Activated T-helper 2 cell treated with anti-CD3 and anti-CD28 coated beads, Interferon-gamma antibody, Interleukin-2, Interleukin-4, amounts not matched to agents 10 μg/mL and 5 μg/mL and 100 μg/mL, durations not matched to agents 14 hours and 24 hours and 36 hours (primary cell): ENCODE measurements at regions of chr17 and their contacts with region 1.

Region 1: DNA sequence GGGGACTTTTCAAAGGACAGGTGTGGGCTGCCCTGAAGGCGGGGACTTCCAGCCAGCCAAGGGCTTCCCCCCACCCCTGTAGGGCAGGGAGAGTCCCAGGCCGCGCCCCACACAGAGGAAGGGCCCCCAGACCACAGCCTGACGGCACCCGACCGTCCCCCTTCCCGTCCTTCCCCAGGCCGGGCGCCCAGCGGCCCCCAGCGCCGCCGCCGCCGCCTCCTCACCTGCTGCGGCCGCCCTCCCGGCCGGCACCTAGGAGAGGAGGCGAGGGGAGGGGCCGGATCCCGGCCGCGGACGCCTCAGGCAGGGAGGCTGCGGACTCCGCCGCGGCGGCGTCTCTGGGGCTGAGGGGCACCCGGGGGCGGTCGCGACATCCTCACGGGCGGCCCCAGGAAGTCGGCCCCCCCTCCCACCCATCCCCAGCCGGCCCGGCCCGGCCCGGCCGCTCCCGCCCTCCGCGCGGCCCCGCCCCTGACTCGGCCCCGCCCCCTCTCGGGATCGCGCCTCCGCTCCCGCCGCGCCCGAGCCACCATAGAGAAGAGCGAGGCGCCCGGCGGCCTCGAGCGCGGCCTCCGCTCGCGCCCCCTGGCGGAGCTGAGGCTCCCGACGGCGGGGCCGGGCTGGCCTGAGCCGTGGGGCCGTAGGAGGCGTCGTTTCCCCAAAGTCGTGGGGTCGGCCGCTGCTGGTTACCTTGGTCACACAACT is 25.5 kb upstream of the RFFL start:
- DNase-seq: peak; percentile 84
- H3K4me3 Mint-ChIP-seq: peak overlapping the region; percentile 88
- H3K27ac Mint-ChIP-seq: peak overlapping the region; percentile 92
- H3K4me1 Mint-ChIP-seq: peaks cover 41% of the 10 kb centered on the region
- H3K27me3 Mint-ChIP-seq: no peaks in the 10 kb centered on the region

Region 2: DNA sequence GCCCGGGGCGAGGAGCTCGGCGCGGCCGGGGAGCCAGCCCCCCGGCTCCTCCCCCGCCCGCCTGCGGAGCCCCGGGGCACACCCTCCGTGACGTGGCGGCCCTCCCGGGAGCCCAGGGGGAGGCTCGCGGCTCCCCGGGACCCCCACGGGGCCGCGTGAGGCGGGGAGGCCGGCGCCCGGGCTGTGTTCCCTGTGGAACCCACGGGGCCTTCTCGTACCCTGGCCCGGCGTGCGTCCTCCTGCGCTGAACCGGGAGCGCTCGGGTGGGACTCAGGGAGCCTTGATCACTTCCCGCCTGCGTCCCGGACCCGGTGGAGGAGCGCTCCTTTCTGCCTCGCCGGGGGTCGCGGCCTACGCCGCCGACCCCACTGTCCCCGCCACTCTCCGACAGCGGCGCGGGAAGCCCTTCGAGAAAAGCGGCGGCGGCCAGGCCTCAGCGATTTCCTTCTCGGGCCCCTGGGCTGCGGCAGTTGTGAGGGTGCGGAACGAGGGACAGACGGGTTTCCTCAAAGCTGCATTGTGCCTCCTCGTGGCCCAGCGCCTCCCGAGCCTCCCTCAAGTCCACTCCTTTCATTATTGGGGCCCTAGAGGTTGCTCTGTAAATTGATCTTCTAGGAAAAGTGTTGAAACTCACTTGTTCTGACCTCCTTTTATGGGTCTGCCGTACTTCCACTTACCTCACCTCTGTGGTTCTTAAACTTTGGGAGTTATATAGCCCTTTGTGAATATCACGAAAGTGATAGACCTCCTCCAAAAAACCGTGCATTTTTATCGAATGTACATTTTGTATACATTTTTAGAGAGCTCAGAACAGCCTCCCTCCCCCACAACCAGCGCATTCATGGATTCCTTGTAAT is 108.1 kb before region 1 on chr17:
- intact Hi-C with region 1: loop called (anchors 5 kb)
- DNase-seq: peak; percentile 74
- H3K4me3 Mint-ChIP-seq: peak overlapping the region; percentile 94
- H3K27ac Mint-ChIP-seq: peak overlapping the region; percentile 96
- H3K4me1 Mint-ChIP-seq: peaks cover 39% of the 10 kb centered on the region
- H3K27me3 Mint-ChIP-seq: no peaks in the 10 kb centered on the region

Region 3: GRCh38 chr17:34998205-34998604 is 90.8 kb before region 1 on chr17:
- intact Hi-C with region 1: loop called (anchors 1 kb)
- DNase-seq: peak; percentile 70
- H3K4me3 Mint-ChIP-seq: no peak overlapping the region
- H3K27ac Mint-ChIP-seq: peak overlapping the region; percentile 57
- H3K4me1 Mint-ChIP-seq: peaks cover 6% of the 10 kb centered on the region
- H3K27me3 Mint-ChIP-seq: no peaks in the 10 kb centered on the region

Region 4: DNA sequence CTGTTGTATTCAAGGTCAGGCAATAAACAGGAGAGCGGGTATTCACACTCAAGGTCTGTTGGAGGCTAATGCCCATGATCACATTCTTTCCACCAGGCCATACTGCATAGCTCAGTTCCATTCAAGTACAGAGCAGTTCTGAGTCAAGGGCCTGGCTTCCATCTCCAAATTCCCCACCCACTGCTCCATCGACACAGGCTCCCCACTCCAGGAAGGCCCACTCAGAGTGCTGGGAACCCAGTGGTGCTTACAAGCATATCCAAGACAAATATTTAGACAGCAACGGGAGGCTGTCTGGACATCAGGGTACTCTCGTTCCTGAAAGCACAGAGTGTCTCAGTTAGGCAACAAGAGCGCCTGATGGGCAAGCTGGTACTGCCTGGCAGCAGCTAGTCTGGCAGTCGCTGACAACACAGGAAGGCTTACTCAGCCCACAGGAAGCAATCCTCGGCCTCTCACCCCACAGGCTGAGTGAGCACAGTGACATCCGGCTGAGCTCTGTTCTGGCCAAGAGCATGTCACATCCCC is 66.4 kb before region 1 on chr17:
- intact Hi-C with region 1: loop called (anchors 1 kb)
- DNase-seq: peak; percentile 63
- H3K4me3 Mint-ChIP-seq: peak overlapping the region; percentile 70
- H3K27ac Mint-ChIP-seq: peak overlapping the region; percentile 99
- H3K4me1 Mint-ChIP-seq: peaks cover 30% of the 10 kb centered on the region
- H3K27me3 Mint-ChIP-seq: no peaks in the 10 kb centered on the region

Region 5: DNA sequence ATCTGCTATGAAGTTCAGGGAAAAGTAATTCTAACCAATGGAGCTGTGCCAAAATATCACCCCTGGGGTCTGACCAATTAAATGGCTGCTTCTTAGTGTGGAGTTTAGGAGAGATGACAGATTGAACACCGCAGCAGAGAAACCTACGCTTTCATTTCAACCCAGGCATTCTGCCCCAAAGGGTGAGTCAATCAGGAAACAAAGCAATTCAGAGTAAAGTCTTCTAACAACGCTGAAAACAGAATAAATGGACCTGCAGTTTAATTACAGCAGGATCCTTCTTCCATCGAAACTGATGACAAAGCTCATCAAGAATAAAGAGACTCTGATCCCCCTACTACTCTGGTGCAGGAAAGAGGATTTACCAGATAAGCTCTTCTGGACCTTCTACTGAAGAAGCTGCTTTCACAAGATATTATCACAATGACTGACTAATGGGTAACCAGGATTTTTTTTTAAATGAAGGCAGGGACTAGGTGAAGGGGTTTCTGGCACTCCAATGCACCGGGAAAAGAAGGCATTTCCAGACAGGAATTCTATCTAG is 42.2 kb before region 1 on chr17:
- intact Hi-C with region 1: loop called (anchors 1 kb)
- DNase-seq: peak; percentile 59
- H3K4me3 Mint-ChIP-seq: peak overlapping the region; percentile 77
- H3K27ac Mint-ChIP-seq: peak overlapping the region; percentile 95
- H3K4me1 Mint-ChIP-seq: peaks cover 49% of the 10 kb centered on the region
- H3K27me3 Mint-ChIP-seq: no peaks in the 10 kb centered on the region

Region 6: GRCh38 chr17:35057332-35057915 is 31.6 kb before region 1 on chr17:
- intact Hi-C with region 1: no loop called
- DNase-seq: no peak
- H3K4me3 Mint-ChIP-seq: no peak overlapping the region
- H3K27ac Mint-ChIP-seq: no peak overlapping the region
- H3K4me1 Mint-ChIP-seq: peaks cover 33% of the 10 kb centered on the region
- H3K27me3 Mint-ChIP-seq: no peaks in the 10 kb centered on the region

Region 7: DNA sequence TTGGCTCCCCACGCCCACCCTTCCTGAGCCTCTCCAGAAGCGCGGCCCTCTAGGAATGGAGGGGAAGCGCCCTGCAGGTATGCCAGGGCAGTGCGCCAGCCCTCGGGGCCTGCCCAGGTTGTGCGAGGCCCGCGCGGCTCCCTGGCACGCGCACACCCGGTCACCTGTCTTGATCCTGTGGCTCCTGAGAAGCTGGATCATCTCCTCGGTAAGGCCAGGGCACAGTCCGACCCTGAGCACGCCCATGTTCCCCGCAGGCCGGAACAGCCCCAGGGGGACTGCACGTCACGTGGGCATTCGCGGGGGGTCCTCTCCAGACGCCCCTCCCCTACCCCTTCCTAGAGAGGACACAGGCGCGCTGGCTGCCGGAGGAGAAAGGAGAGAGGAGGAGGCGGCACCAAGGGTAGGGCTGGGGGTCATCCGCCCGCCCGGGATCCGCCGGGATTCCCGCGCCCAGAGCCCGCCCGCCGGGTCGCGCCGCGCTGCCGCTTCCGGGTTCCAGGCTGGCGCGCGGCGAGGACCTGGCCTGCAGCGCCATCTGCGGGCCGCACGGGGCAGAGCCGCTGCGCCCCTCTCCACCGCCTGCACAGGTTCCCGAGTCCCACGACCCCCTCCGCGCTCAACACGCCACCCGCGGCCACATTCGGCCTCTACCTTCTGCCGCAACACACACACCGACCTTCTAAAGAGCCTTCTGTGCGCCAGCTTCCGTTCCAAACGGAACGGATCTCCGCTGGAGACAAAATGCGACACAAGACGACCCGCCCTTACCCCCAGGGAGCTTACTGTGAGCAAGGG is 30.5 kb after region 1 on chr17 and contains the start of gene RAD51D:
- intact Hi-C with region 1: loop called (anchors 1 kb)
- DNase-seq: peak; percentile 75
- H3K4me3 Mint-ChIP-seq: peak within 1 kb of the TSS; percentile 94
- H3K27ac Mint-ChIP-seq: peak within 1 kb of the TSS; percentile 89
- H3K4me1 Mint-ChIP-seq: peaks cover 23% of the 10 kb centered on the region
- H3K27me3 Mint-ChIP-seq: peaks cover 1% of the 10 kb centered on the region
- total RNA-seq, gene RAD51D: 29.5 and 31.9 TPM in 2 replicates